Astrocyte of the cerebellum (primary cell): ENCODE measurements at regions of chr4 and their contacts with region 1.

Region 1: GRCh38 chr4:173478201-173478912 is 51.7 kb downstream of the HAND2 start:
- DNase-seq: no peak
- H3K4me3 ChIP-seq: no peak overlapping the region
- CTCF ChIP-seq: no peak

Region 2: DNA sequence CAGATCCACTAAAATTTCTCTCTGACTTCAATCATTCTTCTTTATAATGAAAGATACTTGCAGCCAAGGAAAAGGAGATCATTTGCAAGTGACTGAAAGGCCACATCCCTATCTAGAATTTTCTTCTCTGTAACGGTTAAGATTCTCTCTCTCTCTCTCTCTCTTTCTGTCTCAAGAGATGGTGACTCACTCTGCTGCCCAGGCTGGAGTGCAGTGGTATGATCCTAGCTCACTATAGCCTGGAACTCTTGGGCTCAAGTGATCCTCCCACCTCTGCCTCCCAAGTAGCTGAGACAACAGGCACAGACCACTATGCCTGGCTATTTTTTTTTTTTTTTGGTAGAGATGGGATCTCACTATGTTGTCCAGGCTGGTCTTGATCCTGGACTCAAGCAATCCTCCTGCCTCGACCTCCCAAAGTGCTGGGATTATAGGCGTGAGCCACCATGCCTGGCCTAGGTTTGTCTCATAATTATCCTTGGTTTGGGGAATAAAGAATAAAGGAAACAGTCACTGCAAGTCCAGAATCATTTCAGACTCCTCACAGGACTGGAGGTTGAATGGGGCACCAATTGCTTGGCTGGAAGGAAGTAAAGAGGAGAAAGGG is 343.0 kb before region 1 on chr4:
- in situ Hi-C with region 1: no loop called
- DNase-seq: no peak
- H3K4me3 ChIP-seq: no peak overlapping the region
- CTCF ChIP-seq: no peak

Region 3: DNA sequence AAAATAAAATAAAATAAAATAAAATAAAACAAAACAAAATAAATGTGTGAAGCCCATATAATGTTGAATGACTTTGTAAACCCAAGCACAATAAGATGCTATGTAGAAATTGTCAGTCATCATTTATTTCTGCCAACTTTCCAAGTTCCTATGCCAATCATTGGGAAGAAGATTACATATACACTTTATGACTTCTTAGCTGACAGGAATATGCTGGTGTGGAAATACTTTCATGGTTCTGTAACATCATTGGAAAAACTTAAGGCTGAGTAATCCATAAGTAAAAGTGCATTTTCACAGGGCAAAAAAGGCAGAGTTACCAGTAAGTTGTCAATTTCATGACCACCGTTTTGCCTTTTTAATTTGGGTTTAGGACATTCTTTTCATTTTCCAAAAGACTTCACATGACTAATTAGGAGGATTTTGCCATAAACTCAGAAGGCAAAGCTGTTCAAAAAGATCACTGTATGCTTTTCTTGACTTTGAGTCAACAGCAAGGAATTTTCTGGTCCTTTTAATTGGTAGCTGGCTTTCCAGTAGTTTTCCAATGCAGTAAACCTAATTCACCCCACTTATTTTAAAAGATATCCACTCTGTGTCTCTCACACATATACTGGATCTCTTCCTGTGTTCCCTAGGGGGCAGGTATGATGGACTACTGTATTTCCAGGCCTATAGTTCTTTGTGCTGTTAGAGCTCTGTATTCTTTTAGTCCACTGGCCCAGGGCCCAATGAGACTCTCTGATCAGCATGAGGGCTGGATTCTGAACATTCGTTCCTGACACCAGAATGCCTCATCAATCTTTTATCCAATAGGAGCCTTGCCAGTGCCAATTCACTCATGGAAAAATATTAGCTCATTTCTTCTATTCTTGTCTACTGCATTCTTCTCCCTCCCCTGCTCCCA is 53.2 kb before region 1 on chr4:
- in situ Hi-C with region 1: loop called (anchors 5 kb)
- DNase-seq: peak; percentile 85
- H3K4me3 ChIP-seq: no peak overlapping the region
- CTCF ChIP-seq: peak; percentile 9